T-cell (primary cell): ENCODE measurements at regions of chr7 and their contacts with region 1.

Region 1: DNA sequence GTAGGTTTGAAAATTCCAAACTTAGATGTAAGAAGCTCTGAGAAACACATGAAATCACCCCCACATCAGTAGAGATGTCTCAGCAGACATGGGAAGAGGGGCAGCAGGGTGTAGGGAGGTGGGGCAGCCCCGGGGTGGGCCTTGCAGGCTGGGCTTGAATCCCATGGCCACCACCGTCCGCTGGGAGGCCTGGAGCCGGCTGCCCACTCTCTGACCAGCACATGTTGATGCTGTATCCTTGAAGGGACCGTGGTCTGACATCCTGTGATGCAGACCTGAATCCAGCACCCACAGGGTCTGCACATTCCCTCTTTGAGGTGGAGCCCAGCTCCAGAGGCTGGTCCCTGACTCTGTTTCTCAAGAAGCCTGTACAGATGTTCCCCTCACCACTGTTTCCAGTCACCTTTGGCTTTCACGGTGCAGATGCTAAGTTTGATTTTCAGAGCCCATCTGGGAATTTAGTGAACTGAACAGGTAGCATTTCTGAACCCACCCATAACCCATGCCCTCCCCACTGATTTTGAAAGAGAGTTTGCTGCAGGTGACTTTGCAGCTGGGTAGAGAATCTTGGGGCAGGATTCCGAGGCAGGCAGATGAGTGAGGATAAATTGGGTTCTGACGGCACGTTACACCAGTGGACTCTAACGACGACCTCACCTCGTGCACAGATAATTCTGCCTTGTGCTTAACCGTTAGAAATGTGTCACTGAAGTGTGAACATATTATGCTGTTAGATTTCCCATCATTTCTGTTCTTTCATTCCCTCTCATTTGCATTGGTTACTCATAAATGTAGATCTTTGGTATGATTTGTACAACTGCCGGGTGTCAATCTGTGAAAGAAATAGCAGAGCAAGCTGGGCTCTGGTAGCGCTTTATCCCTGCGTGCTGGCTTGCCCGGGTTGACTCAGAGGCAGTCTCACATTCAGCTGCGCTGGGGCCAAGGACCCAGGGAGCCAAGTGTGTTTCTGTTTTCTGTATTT is 45.7 kb downstream of the IKZF1 start:
- DNase-seq: peak in 32 of 35 experiments; percentile 43 to 76 (median 60)
- ATAC-seq: peak; percentile 48 to 71 (median 70)
- H3K4me3 ChIP-seq: peak overlapping the region; percentile 11 to 20
- H3K4me3 Mint-ChIP-seq: peak overlapping the region; percentile 51 to 74 (median 67)
- H3K27ac ChIP-seq: peak overlapping the region; percentile 96
- H3K27ac Mint-ChIP-seq: peak overlapping the region; percentile 95 to 96
- H3K4me1 ChIP-seq: peaks cover 91% of the 10 kb centered on the region in 2 experiments
- H3K4me1 Mint-ChIP-seq: peaks cover 98 to 100% (median 99%) of the 10 kb centered on the region in 3 donors
- H3K27me3 ChIP-seq: no peaks in the 10 kb centered on the region
- H3K27me3 Mint-ChIP-seq: no peaks in the 10 kb centered on the region

Region 2: DNA sequence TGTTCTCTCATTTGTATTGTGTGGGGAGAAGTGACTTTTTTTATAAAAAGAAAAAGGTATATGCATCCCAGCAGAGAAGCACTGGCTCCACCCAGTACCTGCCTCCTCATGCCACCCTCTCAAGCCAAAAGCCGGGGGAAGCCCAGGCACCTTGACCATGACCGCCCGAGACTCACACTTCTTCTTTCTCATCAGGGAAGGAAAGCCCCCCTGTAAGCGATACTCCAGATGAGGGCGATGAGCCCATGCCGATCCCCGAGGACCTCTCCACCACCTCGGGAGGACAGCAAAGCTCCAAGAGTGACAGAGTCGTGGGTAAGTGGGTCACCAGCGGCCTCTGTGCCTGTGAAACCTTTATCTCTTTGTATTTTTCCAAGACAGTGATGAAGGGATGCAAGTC is 22.8 kb before region 1 on chr7:
- CTCF ChIA-PET with region 1: interaction called, 4 to 7 read pairs
- POLR2A ChIA-PET with region 1: interaction called, 14 to 17 read pairs
- DNase-seq: no peak
- ATAC-seq: no peak
- H3K4me3 ChIP-seq: no peak overlapping the region
- H3K4me3 Mint-ChIP-seq: no peak overlapping the region
- H3K27ac ChIP-seq: peak overlapping the region; percentile 57
- H3K27ac Mint-ChIP-seq: peak overlapping the region in 1 of 2 donors; percentile 82
- H3K4me1 ChIP-seq: peaks cover 64 to 70% of the 10 kb centered on the region in 2 experiments
- H3K4me1 Mint-ChIP-seq: peaks cover 59 to 99% (median 60%) of the 10 kb centered on the region in 3 donors
- H3K27me3 ChIP-seq: no peaks in the 10 kb centered on the region
- H3K27me3 Mint-ChIP-seq: no peaks in the 10 kb centered on the region

Region 3: GRCh38 chr7:50359995-50360925 is 10.0 kb after region 1 on chr7:
- CTCF ChIA-PET with region 1: interaction called, 3 to 7 read pairs
- POLR2A ChIA-PET with region 1: interaction called, 12 to 26 read pairs
- DNase-seq: peak; percentile 57 to 95 (median 83)
- ATAC-seq: peak; percentile 85 to 92 (median 87)
- H3K4me3 ChIP-seq: peak overlapping the region in 1 of 2 donors; percentile 10
- H3K4me3 Mint-ChIP-seq: peak overlapping the region; percentile 63 to 73 (median 71)
- H3K27ac ChIP-seq: peak overlapping the region; percentile 96
- H3K27ac Mint-ChIP-seq: peak overlapping the region; percentile 99
- H3K4me1 ChIP-seq: peaks cover 92 to 95% of the 10 kb centered on the region in 2 experiments
- H3K4me1 Mint-ChIP-seq: peaks cover 98 to 99% (median 98%) of the 10 kb centered on the region in 3 donors
- H3K27me3 ChIP-seq: no peaks in the 10 kb centered on the region
- H3K27me3 Mint-ChIP-seq: no peaks in the 10 kb centered on the region

Region 4: GRCh38 chr7:50423860-50424259 is 73.6 kb after region 1 on chr7:
- CTCF ChIA-PET with region 1: no interaction called
- POLR2A ChIA-PET with region 1: no interaction called
- DNase-seq: no peak
- ATAC-seq: no peak
- H3K4me3 ChIP-seq: no peak overlapping the region
- H3K4me3 Mint-ChIP-seq: no peak overlapping the region
- H3K27ac ChIP-seq: no peak overlapping the region
- H3K27ac Mint-ChIP-seq: no peak overlapping the region
- H3K4me1 ChIP-seq: no peaks in the 10 kb centered on the region
- H3K4me1 Mint-ChIP-seq: no peaks in the 10 kb centered on the region
- H3K27me3 ChIP-seq: no peaks in the 10 kb centered on the region
- H3K27me3 Mint-ChIP-seq: no peaks in the 10 kb centered on the region